ENCODE measurements at regions of chr21 and their contacts with region 1.

Region 1: DNA sequence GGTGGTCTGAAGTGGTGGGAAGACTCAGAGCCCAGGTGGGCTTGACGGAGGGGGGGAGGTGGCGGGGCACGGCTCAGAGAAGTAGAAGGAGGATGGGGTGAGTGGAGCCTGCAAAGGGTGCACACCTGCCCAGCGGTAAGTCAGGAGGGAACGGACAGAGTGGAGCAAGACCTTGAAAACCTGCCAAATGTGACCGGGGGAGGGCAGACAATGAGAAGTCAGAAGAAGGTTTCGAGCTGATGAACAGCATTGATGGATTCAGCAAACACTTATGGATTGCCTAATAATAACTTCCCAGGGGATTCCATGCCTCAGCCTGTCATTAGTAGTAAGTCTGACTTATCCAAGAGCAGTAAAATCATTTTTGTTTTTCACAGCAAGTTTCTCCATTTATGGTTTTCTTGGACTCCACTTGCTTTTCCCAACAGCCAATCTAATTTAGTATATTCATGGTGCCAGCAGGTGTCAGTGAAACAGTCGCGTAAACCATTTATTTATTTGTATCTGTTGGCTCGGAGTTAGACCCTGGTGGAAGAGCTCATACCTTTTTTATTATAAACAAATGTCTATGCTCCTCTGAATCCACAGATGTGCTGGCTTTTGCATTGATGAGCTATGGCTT is 279.1 kb downstream of the PCP4 start:
- DNase-seq: peak; percentile 45 to 46
- H3K4me3 ChIP-seq: no peak overlapping the region
- H3K27ac ChIP-seq: no peak overlapping the region
- H3K4me1 ChIP-seq: peaks cover 10 to 11% of the 10 kb centered on the region in 2 donors
- H3K27me3 ChIP-seq: no peaks in the 10 kb centered on the region
- CTCF ChIP-seq: no peak
- POLR2A ChIP-seq: no peak

Region 2: GRCh38 chr21:39048064-39048463 is 1098.3 kb before region 1 on chr21:
- intact Hi-C with region 1: no loop called
- DNase-seq: peak in 1 of 2 donors; percentile 22
- H3K4me3 ChIP-seq: no peak overlapping the region
- H3K27ac ChIP-seq: no peak overlapping the region
- H3K4me1 ChIP-seq: no peaks in the 10 kb centered on the region
- H3K27me3 ChIP-seq: no peaks in the 10 kb centered on the region
- CTCF ChIP-seq: no peak
- POLR2A ChIP-seq: no peak

Region 3: GRCh38 chr21:39660191-39660980 is 485.9 kb before region 1 on chr21:
- intact Hi-C with region 1: no loop called
- DNase-seq: no peak
- H3K4me3 ChIP-seq: no peak overlapping the region
- H3K27ac ChIP-seq: no peak overlapping the region
- H3K4me1 ChIP-seq: peaks cover 9 to 11% of the 10 kb centered on the region in 2 donors
- H3K27me3 ChIP-seq: no peaks in the 10 kb centered on the region
- CTCF ChIP-seq: no peak
- POLR2A ChIP-seq: no peak

Region 4: DNA sequence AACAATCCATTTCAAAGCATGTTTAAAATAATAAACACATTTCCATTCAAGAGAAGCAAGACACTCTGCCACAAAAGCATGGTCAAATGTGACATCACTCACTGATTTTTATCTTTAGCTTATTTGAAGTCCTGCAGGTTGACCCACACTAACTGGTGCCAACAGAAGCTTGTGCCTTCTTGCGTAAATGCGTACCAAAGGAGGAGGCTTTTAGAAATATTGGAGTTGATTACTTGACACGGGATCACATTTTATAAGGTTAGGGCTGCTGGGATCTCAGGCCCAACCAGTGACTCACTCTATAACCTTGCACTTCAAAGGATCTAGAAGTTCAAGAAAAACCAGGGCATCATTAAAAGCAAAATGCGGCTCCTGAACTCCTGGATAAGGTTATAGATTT is 75.4 kb before region 1 on chr21:
- intact Hi-C with region 1: no loop called
- DNase-seq: no peak
- H3K4me3 ChIP-seq: no peak overlapping the region
- H3K27ac ChIP-seq: no peak overlapping the region
- H3K4me1 ChIP-seq: no peaks in the 10 kb centered on the region
- H3K27me3 ChIP-seq: no peaks in the 10 kb centered on the region
- CTCF ChIP-seq: no peak
- POLR2A ChIP-seq: no peak

Region 5: GRCh38 chr21:40381111-40381510 is 234.8 kb after region 1 on chr21:
- intact Hi-C with region 1: loop called (anchors 5 kb)
- DNase-seq: no peak
- H3K4me3 ChIP-seq: no peak overlapping the region
- H3K27ac ChIP-seq: no peak overlapping the region
- H3K4me1 ChIP-seq: no peaks in the 10 kb centered on the region
- H3K27me3 ChIP-seq: no peaks in the 10 kb centered on the region
- CTCF ChIP-seq: no peak
- POLR2A ChIP-seq: no peak

Region 6: GRCh38 chr21:41068967-41069642 is 922.8 kb after region 1 on chr21:
- intact Hi-C with region 1: loop called (anchors 5 kb)
- DNase-seq: peak; percentile 78 to 84
- H3K4me3 ChIP-seq: no peak overlapping the region
- H3K27ac ChIP-seq: no peak overlapping the region
- H3K4me1 ChIP-seq: peaks cover 0 to 5% of the 10 kb centered on the region in 2 donors
- H3K27me3 ChIP-seq: no peaks in the 10 kb centered on the region
- CTCF ChIP-seq: peak; percentile 58 to 91 (median 81)
- POLR2A ChIP-seq: no peak